ENCODE measurements at regions of chr16 and their contacts with region 1.

Region 1: GRCh38 chr16:11255737-11256660 is at the start of gene SOCS1:
- DNase-seq: peak; percentile 94
- ATAC-seq: peak; percentile 54
- H3K4me3 Mint-ChIP-seq: peak within 1 kb of the TSS; percentile 98
- H3K27ac Mint-ChIP-seq: peak within 1 kb of the TSS; percentile 98
- H3K4me1 Mint-ChIP-seq: peaks cover 46% of the 10 kb centered on the region
- H3K27me3 Mint-ChIP-seq: no peaks in the 10 kb centered on the region
- total RNA-seq, gene SOCS1: 100.0 to 103 TPM

Region 2: GRCh38 chr16:10964039-10964890 is 291.7 kb before region 1 on chr16:
- CTCF ChIA-PET with region 1: interaction called, 34 read pairs
- POLR2A ChIA-PET with region 1: interaction called, 49 read pairs
- intact Hi-C with region 1: loop called (anchors 1 kb)
- DNase-seq: peak; percentile 93
- ATAC-seq: peak; percentile 40
- H3K4me3 Mint-ChIP-seq: peak overlapping the region; percentile 59
- H3K27ac Mint-ChIP-seq: peak overlapping the region; percentile 98
- H3K4me1 Mint-ChIP-seq: peaks cover 74% of the 10 kb centered on the region
- H3K27me3 Mint-ChIP-seq: no peaks in the 10 kb centered on the region

Region 3: DNA sequence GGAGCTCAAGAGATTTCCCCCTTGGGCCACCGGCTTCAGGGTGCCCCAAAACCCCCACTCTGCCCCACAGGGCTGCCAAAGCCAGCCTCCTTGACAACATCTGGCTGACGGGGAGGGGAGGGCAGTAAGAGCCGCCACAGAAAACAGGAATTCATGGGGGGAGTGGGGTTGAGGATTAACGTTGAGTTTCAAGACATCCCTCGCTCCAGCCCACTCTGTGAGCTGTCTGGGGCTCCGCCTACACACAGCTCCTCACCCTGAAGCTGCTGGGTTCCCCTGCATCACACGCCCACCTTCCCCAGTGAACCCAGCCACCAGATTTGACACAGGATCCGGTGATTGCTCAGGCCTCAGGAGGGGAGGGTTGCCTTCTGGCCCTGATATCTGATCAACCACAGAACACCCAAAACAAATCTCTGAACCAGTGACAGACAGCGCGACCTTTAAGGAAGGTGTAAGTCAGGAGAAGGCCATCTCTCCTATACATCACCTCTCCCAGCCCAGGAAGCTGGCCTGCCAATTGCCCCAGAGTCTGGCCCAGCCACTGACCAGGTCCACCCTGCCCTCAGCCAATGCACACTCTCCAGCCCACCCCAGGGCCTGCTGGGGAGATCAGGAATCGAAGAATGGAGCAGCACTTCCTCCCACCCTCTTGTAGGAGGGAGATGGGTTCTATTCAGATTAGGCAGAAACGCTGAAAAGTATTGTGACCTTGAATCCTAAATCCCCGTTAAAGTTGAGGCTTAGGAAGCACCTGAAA is 179.6 kb before region 1 on chr16:
- CTCF ChIA-PET with region 1: no interaction called
- POLR2A ChIA-PET with region 1: interaction called, 7 read pairs
- intact Hi-C with region 1: loop called in 1 of 2 experiments (anchors 2 kb)
- DNase-seq: peak; percentile 87
- ATAC-seq: peak; percentile 69
- H3K4me3 Mint-ChIP-seq: peak overlapping the region; percentile 15
- H3K27ac Mint-ChIP-seq: peak overlapping the region; percentile 89
- H3K4me1 Mint-ChIP-seq: peaks cover 96% of the 10 kb centered on the region
- H3K27me3 Mint-ChIP-seq: no peaks in the 10 kb centered on the region

Region 4: GRCh38 chr16:11224096-11224893 is 31.7 kb before region 1 on chr16:
- CTCF ChIA-PET with region 1: interaction called, 15 read pairs
- POLR2A ChIA-PET with region 1: interaction called, 79 read pairs
- intact Hi-C with region 1: loop called (anchors 1 kb)
- DNase-seq: peak; percentile 88
- ATAC-seq: peak; percentile 55
- H3K4me3 Mint-ChIP-seq: peak overlapping the region; percentile 54
- H3K27ac Mint-ChIP-seq: peak overlapping the region; percentile 98
- H3K4me1 Mint-ChIP-seq: peaks cover 61% of the 10 kb centered on the region
- H3K27me3 Mint-ChIP-seq: no peaks in the 10 kb centered on the region

Region 5: GRCh38 chr16:11345040-11345862 is 89.3 kb after region 1 on chr16 and contains the start of gene RMI2:
- CTCF ChIA-PET with region 1: interaction called, 3 read pairs
- POLR2A ChIA-PET with region 1: interaction called, 3 read pairs
- intact Hi-C with region 1: loop called in 1 of 2 experiments (anchors 1 kb)
- DNase-seq: peak; percentile 99
- ATAC-seq: peak; percentile 96
- H3K4me3 Mint-ChIP-seq: peak within 1 kb of the TSS; percentile 90
- H3K27ac Mint-ChIP-seq: peak within 1 kb of the TSS; percentile 94
- H3K4me1 Mint-ChIP-seq: peaks cover 49% of the 10 kb centered on the region
- H3K27me3 Mint-ChIP-seq: no peaks in the 10 kb centered on the region
- total RNA-seq, gene RMI2: 56.0 to 69.8 TPM

Region 6: GRCh38 chr16:11431915-11432465 is 176.0 kb after region 1 on chr16:
- CTCF ChIA-PET with region 1: no interaction called
- POLR2A ChIA-PET with region 1: no interaction called
- intact Hi-C with region 1: no loop called
- DNase-seq: no peak
- ATAC-seq: no peak
- H3K4me3 Mint-ChIP-seq: no peak overlapping the region
- H3K27ac Mint-ChIP-seq: no peak overlapping the region
- H3K4me1 Mint-ChIP-seq: no peaks in the 10 kb centered on the region
- H3K27me3 Mint-ChIP-seq: no peaks in the 10 kb centered on the region

Region 7: DNA sequence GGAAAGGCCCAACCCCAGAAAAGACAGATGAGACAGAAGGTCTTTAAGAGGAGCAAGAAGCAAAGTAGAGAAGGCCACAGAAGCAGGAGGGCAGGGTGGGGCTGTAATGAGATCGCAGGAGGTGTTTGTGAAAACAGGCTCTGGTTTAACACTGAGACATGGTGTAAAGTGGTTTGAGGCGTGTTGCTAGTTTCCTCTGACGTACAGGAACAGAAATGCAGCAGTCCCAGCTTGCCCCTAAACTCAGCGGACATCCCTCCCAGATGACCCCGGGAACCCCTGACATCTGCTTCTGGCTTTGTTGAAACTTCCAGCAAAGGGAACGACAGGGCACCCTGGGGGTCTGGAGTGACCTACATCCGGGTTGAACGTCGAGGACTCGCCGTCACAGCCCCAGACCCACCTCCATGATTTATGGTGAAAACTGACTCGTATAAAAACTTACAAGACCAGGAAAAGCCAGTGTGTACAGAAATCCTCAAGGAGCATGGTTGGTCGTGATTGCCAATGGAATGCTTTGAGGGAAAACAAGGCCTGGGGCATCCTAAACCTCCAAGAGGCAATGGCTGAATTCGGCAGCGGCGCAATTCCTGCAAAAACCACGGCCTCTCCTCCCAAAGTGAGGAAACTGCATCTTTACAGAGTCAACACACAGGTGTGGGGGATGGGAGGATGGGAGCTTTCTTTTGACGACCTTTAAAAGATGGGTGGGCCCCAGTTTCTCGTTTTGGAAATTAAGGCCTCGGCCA is 304.9 kb after region 1 on chr16:
- CTCF ChIA-PET with region 1: no interaction called
- POLR2A ChIA-PET with region 1: no interaction called
- intact Hi-C with region 1: no loop called
- DNase-seq: peak; percentile 72
- ATAC-seq: peak; percentile 93
- H3K4me3 Mint-ChIP-seq: peak overlapping the region; percentile 71
- H3K27ac Mint-ChIP-seq: peak overlapping the region; percentile 94
- H3K4me1 Mint-ChIP-seq: peaks cover 84% of the 10 kb centered on the region
- H3K27me3 Mint-ChIP-seq: no peaks in the 10 kb centered on the region

Region 8: GRCh38 chr16:11742539-11743307 is 486.7 kb after region 1 on chr16 and contains the start of gene TXNDC11:
- CTCF ChIA-PET with region 1: no interaction called
- POLR2A ChIA-PET with region 1: interaction called, 8 read pairs
- intact Hi-C with region 1: loop called in 1 of 2 experiments (anchors 5 kb)
- DNase-seq: peak; percentile 100
- ATAC-seq: peak; percentile 92
- H3K4me3 Mint-ChIP-seq: peak within 1 kb of the TSS; percentile 88
- H3K27ac Mint-ChIP-seq: peak within 1 kb of the TSS; percentile 96
- H3K4me1 Mint-ChIP-seq: peaks cover 50% of the 10 kb centered on the region
- H3K27me3 Mint-ChIP-seq: no peaks in the 10 kb centered on the region
- total RNA-seq, gene TXNDC11: 27.3 to 28.3 TPM

Measured in activated CD4-positive, alpha-beta T cell treated with anti-CD3 and anti-CD28 coated beads for 36 hours (primary cell).